ENCODE measurements at regions of chr12 and their contacts with region 1.

Region 1: GRCh38 chr12:94149119-94149780 is 873 bp downstream of the PLXNC1 start:
- DNase-seq: peak; percentile 84
- CTCF ChIP-seq: peak; percentile 83

Region 2: DNA sequence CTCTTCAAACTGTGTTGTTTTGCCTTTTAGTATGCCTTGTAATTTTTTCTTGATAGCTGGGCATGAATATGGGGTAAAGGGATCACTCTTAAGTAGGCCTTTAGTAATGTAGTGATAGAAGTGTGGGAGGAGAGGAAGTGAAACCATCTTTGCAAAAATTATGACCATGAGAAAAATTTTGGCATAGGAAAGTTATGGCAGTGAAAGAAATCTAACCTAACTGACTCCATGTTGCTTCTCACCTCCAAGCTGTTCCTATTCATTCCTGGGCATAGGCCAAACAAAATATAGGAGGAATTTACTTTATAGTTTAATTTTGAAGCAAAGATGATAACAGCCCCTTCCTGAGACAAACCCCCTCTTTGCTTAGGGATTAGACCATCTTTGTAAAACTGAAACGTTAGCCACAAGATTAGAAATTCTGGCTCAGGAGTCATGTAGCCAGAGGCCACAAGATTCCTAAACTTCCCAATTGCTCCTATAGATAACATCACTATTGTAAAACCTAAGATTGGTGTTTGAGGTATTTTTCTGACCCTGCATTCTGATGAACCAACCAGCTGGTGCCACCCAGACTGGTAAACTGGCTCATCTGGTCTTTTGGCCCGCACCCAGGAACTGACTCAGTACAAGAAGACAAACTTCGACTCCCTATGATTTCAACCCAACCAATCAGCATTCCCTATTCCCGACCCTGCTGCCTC is 426.3 kb before region 1 on chr12:
- in situ Hi-C with region 1: no loop called
- DNase-seq: no peak
- CTCF ChIP-seq: no peak

Region 3: DNA sequence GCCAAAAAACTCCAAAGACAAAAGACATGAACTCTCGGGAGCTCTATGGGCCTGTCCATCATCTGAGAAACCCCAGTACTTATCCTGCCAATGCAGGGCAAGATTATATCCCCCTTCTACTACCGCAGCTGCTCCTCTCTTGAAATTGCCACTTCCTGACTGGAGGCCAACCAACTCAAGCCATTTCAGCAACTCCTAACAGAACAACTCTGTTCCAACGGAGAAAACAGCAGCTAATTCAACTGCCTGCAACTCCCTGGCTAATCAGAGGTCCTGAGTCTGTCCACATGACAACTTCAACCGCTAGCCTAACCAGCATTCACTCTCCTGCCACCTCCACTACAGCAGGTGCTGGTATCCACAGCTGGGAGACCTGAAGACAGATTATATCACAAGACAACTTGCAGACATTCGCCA is 286.3 kb after region 1 on chr12:
- in situ Hi-C with region 1: loop called (anchors 10 kb)
- DNase-seq: no peak
- CTCF ChIP-seq: no peak